A673 (cell line): ENCODE measurements at regions of chr17 and their contacts with region 1.

Region 1: GRCh38 chr17:5706577-5707216 is 122.4 kb upstream of the NLRP1 start:
- DNase-seq: peak; percentile 64
- H3K4me3 ChIP-seq: no peak overlapping the region
- H3K27ac ChIP-seq: no peak overlapping the region
- H3K4me1 ChIP-seq: no peaks in the 10 kb centered on the region
- H3K27me3 ChIP-seq: peaks cover 31% of the 10 kb centered on the region
- CTCF ChIP-seq: peak; percentile 85

Region 2: DNA sequence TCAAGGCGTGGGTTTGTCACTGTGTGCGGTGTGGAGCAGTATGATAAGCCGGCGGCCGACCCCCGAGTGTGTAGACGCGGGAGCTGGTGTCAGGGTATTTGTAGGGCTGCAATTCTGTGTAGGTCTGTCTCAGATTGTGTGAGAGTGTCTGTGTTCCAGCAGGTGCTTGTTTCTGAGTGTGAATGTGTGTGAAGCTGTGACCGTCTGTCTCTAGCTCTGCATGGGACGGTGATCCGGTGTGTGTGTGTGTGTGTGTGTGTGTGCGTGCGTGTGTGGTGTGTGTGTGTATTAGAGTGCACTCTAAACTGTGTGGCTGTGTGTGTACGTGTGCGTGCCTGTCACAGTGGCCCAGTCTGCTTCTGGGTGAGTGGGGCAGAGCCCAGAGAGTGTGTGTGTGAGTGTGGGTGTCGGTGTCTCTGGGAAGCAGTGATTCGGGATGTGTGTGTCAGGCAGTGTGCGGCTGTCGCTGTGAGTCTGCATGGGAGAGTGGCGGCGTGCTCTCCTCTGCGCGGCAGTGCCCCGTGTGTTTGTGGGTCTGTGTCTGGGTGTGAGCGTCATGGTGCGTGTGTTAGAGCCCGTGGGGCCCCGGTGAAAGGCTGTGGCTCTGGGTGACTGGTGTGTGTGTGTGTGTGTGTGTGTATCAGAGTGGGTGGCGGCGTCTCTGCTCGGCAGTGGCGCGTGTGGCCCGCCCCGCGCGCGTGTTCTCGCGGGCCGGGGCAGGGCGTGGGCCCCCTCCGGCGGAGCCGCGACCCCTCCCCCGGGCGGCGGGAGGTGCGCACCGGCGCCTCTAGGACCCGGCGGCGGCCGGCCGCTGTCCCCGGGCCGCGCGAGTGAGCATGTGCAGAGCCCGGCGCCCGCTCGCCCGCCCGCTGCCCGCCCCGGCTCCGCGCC is 363.1 kb after region 1 on chr17 and contains the start of gene WSCD1:
- CTCF ChIA-PET with region 1: no interaction called
- POLR2A ChIA-PET with region 1: no interaction called
- intact Hi-C with region 1: no loop called
- DNase-seq: peak; percentile 23
- H3K4me3 ChIP-seq: peak within 1 kb of the TSS; percentile 37
- H3K27ac ChIP-seq: no peak within 1 kb of the TSS
- H3K4me1 ChIP-seq: no peaks in the 10 kb centered on the region
- H3K27me3 ChIP-seq: peaks cover 70% of the 10 kb centered on the region
- CTCF ChIP-seq: no peak
- total RNA-seq, gene WSCD1: 0.28 and 0.48 TPM in 2 replicates

Region 3: GRCh38 chr17:6413065-6413464 is 706.4 kb after region 1 on chr17:
- CTCF ChIA-PET with region 1: no interaction called
- POLR2A ChIA-PET with region 1: no interaction called
- intact Hi-C with region 1: loop called (anchors 5 kb)
- DNase-seq: peak; percentile 70
- H3K4me3 ChIP-seq: no peak overlapping the region
- H3K27ac ChIP-seq: no peak overlapping the region
- H3K4me1 ChIP-seq: no peaks in the 10 kb centered on the region
- H3K27me3 ChIP-seq: peaks cover 14% of the 10 kb centered on the region
- CTCF ChIP-seq: peak; percentile 60